Cardiac septum (tissue), 1 donor: ENCODE measurements at regions of chr7 and their contacts with region 1.

Region 1: DNA sequence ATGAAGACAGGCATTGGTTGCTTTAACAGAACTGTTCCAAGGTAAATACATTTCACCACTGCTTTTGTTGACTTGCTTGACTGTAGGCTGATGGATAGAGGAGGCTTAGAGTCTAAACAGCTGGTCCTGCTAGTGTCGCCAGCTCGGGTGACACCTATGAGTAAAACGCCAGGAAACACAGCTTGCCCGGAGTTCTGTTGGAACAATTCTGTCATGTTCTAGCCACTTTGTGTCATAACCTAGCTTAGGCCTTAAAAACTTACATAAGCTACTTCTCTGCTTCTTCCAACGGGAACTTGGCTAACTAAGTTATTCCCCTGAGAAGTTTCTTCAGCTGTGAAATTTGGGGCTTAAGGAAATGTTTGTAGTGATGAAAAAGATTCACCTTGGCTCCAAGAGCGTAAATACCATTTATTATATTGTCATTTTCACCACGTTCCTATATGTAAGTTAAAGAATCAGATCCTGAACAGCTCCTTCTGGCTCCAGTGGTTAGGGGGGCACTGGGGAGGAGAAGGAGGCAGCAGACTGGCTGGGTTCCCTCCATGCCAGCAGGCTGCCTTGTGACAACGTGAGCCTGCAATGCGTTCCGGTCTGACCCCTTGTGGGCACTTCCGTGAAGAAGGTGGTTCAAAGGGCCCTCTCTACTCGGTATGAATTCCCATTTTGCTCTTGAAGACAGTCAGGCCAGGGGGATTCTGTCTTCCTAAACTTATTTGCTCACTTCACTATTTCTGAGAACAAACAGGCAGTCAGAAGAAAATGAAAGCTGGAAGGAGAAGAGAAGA is 253.2 kb downstream of the BMPER start:
- DNase-seq: no peak

Region 2: GRCh38 chr7:34073676-34074075 is 84.9 kb before region 1 on chr7:
- intact Hi-C with region 1: no loop called
- DNase-seq: no peak

Region 3: DNA sequence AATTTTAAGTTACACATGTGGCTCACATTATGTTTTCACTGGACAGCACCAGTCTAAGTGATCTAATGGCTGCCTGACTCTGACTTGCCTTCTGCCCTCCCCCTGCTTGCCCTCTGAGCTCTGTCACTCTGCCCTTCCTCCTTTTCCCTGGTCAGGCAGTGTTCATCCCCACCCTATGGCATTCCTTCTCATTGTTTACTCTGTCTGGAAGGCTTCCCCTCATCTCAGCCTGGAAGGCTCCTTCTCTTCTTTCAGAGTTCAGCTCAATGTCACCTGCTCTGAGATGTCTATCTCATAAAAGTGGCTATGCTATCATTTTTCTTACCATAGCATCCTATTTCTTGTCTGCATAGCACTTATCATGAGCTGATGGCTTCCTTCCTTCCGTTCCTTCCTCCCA is 52.5 kb after region 1 on chr7:
- intact Hi-C with region 1: loop called (anchors 10 kb)
- DNase-seq: no peak